ENCODE measurements at regions of chr10 and their contacts with region 1.

Region 1: GRCh38 chr10:91163269-91163868 is 57.1 kb upstream of the PCGF5 start:
- DNase-seq: peak; percentile 79
- ATAC-seq: peak; percentile 51
- H3K4me3 Mint-ChIP-seq: peak overlapping the region; percentile 90
- H3K27ac Mint-ChIP-seq: peak overlapping the region; percentile 92
- H3K4me1 Mint-ChIP-seq: peaks cover 53% of the 10 kb centered on the region
- H3K27me3 Mint-ChIP-seq: no peaks in the 10 kb centered on the region
- CTCF ChIP-seq: no peak

Region 2: DNA sequence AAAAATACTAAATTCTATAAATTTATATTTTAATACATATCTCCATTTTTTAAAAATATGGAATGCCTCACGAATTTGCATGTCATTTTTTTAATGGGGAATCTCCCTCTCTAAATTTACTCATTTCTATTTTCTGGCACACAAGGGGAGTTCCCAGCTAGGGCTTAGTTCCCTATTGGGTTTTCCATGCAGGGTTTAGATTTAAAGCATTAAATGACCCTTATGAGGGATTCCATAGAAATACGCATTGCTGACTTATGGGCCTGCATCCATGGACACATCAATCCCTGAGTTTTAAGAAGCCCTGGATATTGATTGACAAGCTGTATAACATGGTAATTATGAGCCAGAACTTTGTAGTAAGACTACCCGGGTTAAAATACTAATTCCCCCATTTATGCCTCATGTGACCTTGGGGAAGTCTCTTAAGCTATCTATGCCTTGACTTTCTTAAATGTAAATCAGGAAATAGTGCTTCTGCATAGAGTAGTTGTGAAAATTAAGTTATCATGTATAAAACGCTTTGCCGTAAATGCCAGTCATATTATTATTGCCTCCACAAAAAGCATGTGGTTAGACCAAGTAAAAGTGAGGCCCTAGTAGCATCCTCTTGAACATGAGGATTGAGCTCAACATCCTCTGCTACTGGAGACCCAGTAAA is 163.7 kb before region 1 on chr10:
- CTCF ChIA-PET with region 1: no interaction called
- POLR2A ChIA-PET with region 1: interaction called, 36 read pairs
- intact Hi-C with region 1: loop called (anchors 2 kb)
- DNase-seq: no peak
- ATAC-seq: peak; percentile 80
- H3K4me3 Mint-ChIP-seq: peak overlapping the region; percentile 56
- H3K27ac Mint-ChIP-seq: peak overlapping the region; percentile 93
- H3K4me1 Mint-ChIP-seq: peaks cover 63% of the 10 kb centered on the region
- H3K27me3 Mint-ChIP-seq: no peaks in the 10 kb centered on the region
- CTCF ChIP-seq: no peak

Region 3: GRCh38 chr10:91103384-91104192 is 59.8 kb before region 1 on chr10:
- CTCF ChIA-PET with region 1: no interaction called
- POLR2A ChIA-PET with region 1: interaction called, 11 read pairs
- intact Hi-C with region 1: loop called (anchors 5 kb)
- DNase-seq: no peak
- ATAC-seq: peak; percentile 82
- H3K4me3 Mint-ChIP-seq: peak overlapping the region; percentile 64
- H3K27ac Mint-ChIP-seq: peak overlapping the region; percentile 54
- H3K4me1 Mint-ChIP-seq: peaks cover 32% of the 10 kb centered on the region
- H3K27me3 Mint-ChIP-seq: no peaks in the 10 kb centered on the region
- CTCF ChIP-seq: no peak

Region 4: DNA sequence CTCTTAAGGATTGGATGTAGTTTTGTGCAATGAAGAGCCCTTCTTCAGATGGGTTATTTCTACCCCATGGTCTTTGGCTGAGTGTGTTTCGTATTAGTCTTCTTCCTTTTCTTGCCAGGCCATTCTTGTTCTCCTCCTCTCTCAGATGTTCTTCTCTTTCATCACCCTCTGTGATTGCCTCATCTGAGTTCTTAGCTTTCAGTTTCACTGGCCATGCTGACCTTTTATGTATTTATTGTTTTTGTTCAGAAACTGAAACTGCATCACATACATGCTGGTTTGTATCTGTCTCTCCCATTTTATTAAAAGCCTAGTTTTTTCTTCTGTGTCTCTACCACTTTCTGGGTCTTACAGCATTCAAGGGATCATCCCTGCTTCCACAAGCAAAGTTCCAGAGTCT is 35.4 kb after region 1 on chr10:
- CTCF ChIA-PET with region 1: interaction called, 9 read pairs
- POLR2A ChIA-PET with region 1: interaction called, 40 read pairs
- intact Hi-C with region 1: loop called (anchors 1 kb)
- DNase-seq: no peak
- ATAC-seq: peak; percentile 23
- H3K4me3 Mint-ChIP-seq: peak overlapping the region; percentile 11
- H3K27ac Mint-ChIP-seq: peak overlapping the region; percentile 86
- H3K4me1 Mint-ChIP-seq: peaks cover 88% of the 10 kb centered on the region
- H3K27me3 Mint-ChIP-seq: no peaks in the 10 kb centered on the region
- CTCF ChIP-seq: no peak

Region 5: GRCh38 chr10:91251430-91252056 is 88.2 kb after region 1 on chr10:
- CTCF ChIA-PET with region 1: interaction called, 16 read pairs
- POLR2A ChIA-PET with region 1: interaction called, 26 read pairs
- intact Hi-C with region 1: loop called (anchors 1 kb)
- DNase-seq: no peak
- ATAC-seq: peak; percentile 82
- H3K4me3 Mint-ChIP-seq: no peak overlapping the region
- H3K27ac Mint-ChIP-seq: no peak overlapping the region
- H3K4me1 Mint-ChIP-seq: peaks cover 4% of the 10 kb centered on the region
- H3K27me3 Mint-ChIP-seq: no peaks in the 10 kb centered on the region
- CTCF ChIP-seq: peak; percentile 97

Measured in activated B cell treated with CpG ODN at 0.5 μM for 24 hours (primary cell).